ENCODE measurements at regions of chr4 and their contacts with region 1.

Region 1: DNA sequence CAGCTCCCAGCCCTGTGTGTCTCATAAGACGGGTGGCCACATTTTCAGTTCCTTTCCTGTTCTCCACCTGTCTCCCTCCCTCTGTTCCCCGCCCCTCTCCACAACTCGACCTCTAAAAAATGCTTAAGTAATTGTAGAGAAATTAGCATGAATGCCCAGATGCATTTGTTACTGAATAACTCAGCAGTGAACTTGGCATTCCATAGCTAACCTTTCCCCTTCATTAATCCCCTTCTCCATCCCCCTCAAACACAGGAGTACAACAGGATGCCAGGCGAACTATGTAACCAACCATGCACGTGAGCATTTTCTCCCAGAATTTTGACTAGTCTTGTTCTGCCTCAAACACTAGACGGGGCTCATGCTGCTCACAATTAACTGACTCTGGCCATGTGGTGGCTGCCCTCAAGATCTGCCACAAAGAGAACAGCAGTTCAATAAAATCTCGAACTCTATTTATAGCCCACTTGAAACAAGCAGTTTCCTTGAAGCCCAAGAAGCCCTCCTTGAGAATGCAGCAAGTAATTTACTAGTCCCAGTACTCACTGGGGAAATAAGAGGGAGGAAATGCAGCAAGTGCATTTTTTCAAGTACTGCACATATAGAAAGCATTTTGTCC is 351.2 kb downstream of the ARHGAP24 start:
- DNase-seq: peak in 1 of 2 donors; percentile 25
- H3K4me3 ChIP-seq: no peak overlapping the region
- H3K27ac ChIP-seq: peak overlapping the region in 1 of 2 donors; percentile 50
- H3K4me1 ChIP-seq: peaks cover 0 to 90% (median 24%) of the 10 kb centered on the region in 4 donors
- H3K27me3 ChIP-seq: no peaks in the 10 kb centered on the region
- CTCF ChIP-seq: peak in 1 of 2 experiments; percentile 35

Region 2: GRCh38 chr4:85573270-85573669 is 252.9 kb before region 1 on chr4:
- intact Hi-C with region 1: no loop called
- DNase-seq: no peak
- H3K4me3 ChIP-seq: no peak overlapping the region
- H3K27ac ChIP-seq: no peak overlapping the region
- H3K4me1 ChIP-seq: no peaks in the 10 kb centered on the region
- H3K27me3 ChIP-seq: no peaks in the 10 kb centered on the region
- CTCF ChIP-seq: no peak

Region 3: GRCh38 chr4:85676850-85677590 is 149.1 kb before region 1 on chr4:
- intact Hi-C with region 1: no loop called
- DNase-seq: no peak
- H3K4me3 ChIP-seq: no peak overlapping the region
- H3K27ac ChIP-seq: no peak overlapping the region
- H3K4me1 ChIP-seq: no peaks in the 10 kb centered on the region
- H3K27me3 ChIP-seq: no peaks in the 10 kb centered on the region
- CTCF ChIP-seq: no peak

Region 4: DNA sequence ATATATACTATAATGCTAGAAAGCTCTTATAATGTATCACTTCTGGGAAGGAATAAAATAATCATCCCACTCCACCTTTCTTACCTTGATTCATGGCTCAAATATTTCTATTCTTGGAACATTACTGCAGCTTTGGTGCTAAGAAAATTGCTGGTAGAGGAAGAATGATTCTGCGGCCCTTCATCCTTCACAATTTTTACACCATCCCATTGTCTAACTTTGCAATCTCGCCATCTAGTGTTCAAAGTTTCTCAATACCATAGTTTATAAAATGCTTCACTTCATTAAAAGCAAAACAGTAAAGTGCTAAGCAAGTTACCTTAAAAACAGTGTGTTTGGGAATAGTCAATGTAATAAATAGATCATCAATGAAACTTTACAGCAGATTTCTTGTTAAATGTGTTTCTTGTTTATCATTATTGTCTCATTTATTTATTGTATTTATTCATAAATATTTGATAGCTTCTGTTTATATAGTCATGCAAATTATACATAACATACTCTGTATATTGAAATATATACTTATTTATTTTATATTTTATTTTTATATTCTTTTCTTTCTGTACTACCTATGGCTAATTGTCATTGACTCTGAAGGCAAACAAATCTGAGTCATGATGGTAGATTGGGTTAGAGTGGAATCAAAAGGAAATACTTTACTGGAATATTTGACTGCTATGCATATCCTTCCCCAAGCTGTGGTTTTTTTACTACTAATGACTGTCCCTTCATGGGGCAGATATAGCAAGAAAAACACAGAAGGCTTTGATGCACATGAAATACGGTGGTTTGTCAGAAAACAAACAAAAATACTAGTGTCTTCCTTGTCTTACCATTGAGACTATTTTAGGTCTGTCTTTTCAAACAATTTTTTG is 143.0 kb after region 1 on chr4:
- intact Hi-C with region 1: loop called (anchors 10 kb)
- DNase-seq: no peak
- H3K4me3 ChIP-seq: no peak overlapping the region
- H3K27ac ChIP-seq: no peak overlapping the region
- H3K4me1 ChIP-seq: peaks cover 0 to 32% (median 6%) of the 10 kb centered on the region in 4 donors
- H3K27me3 ChIP-seq: no peaks in the 10 kb centered on the region
- CTCF ChIP-seq: peak; percentile 51 to 69

Region 5: GRCh38 chr4:85979276-85979675 is 153.1 kb after region 1 on chr4:
- intact Hi-C with region 1: no loop called
- DNase-seq: no peak
- H3K4me3 ChIP-seq: no peak overlapping the region
- H3K27ac ChIP-seq: no peak overlapping the region
- H3K4me1 ChIP-seq: no peaks in the 10 kb centered on the region
- H3K27me3 ChIP-seq: no peaks in the 10 kb centered on the region
- CTCF ChIP-seq: no peak